ENCODE measurements at regions of chr1 and their contacts with region 1.

Region 1: DNA sequence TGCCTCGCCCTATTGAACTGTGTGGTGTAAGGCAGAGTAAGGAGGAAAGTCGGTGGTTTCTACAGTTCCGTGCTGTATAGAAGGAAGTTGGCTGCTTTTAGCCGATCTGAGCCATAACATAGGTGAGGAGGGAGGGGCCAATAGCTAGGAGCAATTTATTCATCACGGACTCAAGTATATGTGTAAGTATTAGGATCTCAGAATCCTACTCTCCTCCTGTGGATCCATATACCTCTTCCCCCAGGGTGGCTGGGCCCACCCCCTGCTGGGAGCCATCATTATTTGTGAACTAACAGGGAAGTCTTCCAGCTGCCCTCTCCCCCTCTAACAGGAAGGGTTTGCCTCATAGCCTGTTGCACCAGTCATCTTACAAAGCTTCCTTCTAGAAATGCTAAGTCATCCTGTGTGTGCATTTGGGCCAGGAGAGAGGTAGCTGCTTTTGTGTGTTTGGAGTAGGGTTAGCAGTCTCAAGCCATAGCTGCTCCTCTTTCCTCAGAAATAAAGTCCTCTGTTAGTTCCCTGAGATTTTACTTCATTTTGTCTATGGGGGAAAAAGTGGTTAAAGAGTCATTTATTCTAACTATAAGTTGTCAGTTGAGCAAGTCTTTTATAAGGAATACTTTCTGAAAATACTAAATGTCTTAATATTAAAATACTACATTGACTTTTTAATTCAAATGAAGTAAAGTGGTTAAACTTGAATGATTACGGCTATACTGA is 14.9 kb upstream of the CENPS start:
- DNase-seq: peak; percentile 78 to 92 (median 91)
- H3K4me3 ChIP-seq: peak overlapping the region in 2 of 3 experiments; percentile 34 to 61
- H3K4me3 Mint-ChIP-seq: peak overlapping the region; percentile 68 to 87
- H3K27ac ChIP-seq: peak overlapping the region; percentile 76 to 88
- H3K27ac Mint-ChIP-seq: peak overlapping the region; percentile 93 to 99 (median 97)
- H3K4me1 ChIP-seq: peaks cover 33 to 42% of the 10 kb centered on the region in 2 donors
- H3K4me1 Mint-ChIP-seq: peaks cover 33% of the 10 kb centered on the region
- H3K27me3 ChIP-seq: no peaks in the 10 kb centered on the region
- H3K27me3 Mint-ChIP-seq: no peaks in the 10 kb centered on the region
- CTCF ChIP-seq: peak; percentile 11

Region 2: GRCh38 chr1:10209905-10210810 is 205.2 kb before region 1 on chr1 and contains the start of gene KIF1B:
- intact Hi-C with region 1: loop called in 1 of 2 experiments (anchors 10 kb)
- DNase-seq: peak; percentile 95 to 98 (median 98)
- H3K4me3 ChIP-seq: peak within 1 kb of the TSS; percentile 89 to 94 (median 91)
- H3K4me3 Mint-ChIP-seq: peak within 1 kb of the TSS; percentile 92 to 94
- H3K27ac ChIP-seq: peak within 1 kb of the TSS; percentile 96 to 97
- H3K27ac Mint-ChIP-seq: peak within 1 kb of the TSS; percentile 96 to 98 (median 97)
- H3K4me1 ChIP-seq: peaks cover 30 to 37% of the 10 kb centered on the region in 2 donors
- H3K4me1 Mint-ChIP-seq: peaks cover 37% of the 10 kb centered on the region
- H3K27me3 ChIP-seq: no peaks in the 10 kb centered on the region
- H3K27me3 Mint-ChIP-seq: peaks cover 3 to 7% (median 4%) of the 10 kb centered on the region in 3 donors
- CTCF ChIP-seq: peak; percentile 95
- polyA plus RNA-seq, gene KIF1B: 3.0 to 7.0 (median 3.3) TPM

Region 3: GRCh38 chr1:10398734-10399623 is 16.4 kb before region 1 on chr1 and contains the start of gene PGD:
- intact Hi-C with region 1: loop called in 1 of 2 experiments (anchors 2 kb)
- DNase-seq: peak; percentile 94 to 96 (median 95)
- H3K4me3 ChIP-seq: peak within 1 kb of the TSS; percentile 69 to 98 (median 87)
- H3K4me3 Mint-ChIP-seq: peak within 1 kb of the TSS; percentile 94 to 99
- H3K27ac ChIP-seq: peak within 1 kb of the TSS; percentile 75 to 83
- H3K27ac Mint-ChIP-seq: peak within 1 kb of the TSS; percentile 87 to 98 (median 96)
- H3K4me1 ChIP-seq: peaks cover 25 to 31% of the 10 kb centered on the region in 2 donors
- H3K4me1 Mint-ChIP-seq: peaks cover 38% of the 10 kb centered on the region
- H3K27me3 ChIP-seq: no peaks in the 10 kb centered on the region
- H3K27me3 Mint-ChIP-seq: no peaks in the 10 kb centered on the region
- CTCF ChIP-seq: no peak
- polyA plus RNA-seq, gene PGD: 173 to 509 (median 471) TPM